Caco-2 (cell line): ENCODE measurements at regions of chr7 and their contacts with region 1.

Region 1: DNA sequence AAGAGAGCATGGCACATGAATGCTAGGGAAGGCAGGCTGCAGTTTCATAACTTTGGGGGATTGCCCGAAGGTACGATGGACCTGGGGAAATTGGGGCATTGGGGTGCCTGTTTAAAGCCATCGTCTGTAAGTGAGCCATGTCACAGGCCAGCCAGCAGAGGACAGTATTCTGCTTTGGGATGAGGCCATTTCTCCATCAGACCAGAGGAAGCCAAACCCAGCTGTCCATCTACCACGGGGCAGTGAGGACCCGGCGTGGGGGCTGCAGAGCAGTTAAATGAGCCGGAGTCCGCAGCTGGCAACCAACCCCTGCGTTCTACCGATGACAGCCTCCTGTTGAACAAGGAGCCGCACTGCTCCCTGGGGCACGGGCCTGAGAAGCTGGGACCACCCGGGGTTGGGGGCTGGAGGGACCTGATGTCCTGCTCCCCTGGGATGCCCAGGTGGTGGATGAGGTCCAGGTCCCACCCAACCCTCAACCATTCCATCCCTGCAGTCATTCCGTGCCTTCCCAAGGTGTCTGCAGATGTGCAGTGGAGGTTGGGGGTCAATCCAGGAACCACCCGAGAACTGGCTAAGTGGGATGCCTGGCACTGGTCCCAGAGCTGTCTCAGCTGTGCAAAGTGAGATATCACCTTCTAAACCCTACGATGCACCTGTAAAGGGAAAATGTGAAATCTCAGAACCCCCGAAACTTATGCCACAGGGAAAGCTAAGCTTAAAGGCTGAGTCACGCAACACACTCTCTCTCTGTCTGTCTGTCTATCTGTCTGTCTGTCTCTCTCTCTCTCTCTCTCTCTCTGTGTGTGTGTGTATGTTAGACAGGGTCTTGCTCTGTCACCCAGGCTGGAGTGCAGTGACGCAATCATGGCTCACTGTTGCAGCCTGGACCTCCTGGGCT is 12.1 kb upstream of the RHBDD2 start:
- DNase-seq: peak; percentile 71 to 76
- H3K4me3 ChIP-seq: no peak overlapping the region
- H3K4me3 Mint-ChIP-seq: no peak overlapping the region
- H3K27ac Mint-ChIP-seq: no peak overlapping the region
- H3K4me1 ChIP-seq: peaks cover 9% of the 10 kb centered on the region
- H3K4me1 Mint-ChIP-seq: peaks cover 11% of the 10 kb centered on the region
- H3K27me3 ChIP-seq: no peaks in the 10 kb centered on the region
- H3K27me3 Mint-ChIP-seq: peaks cover 2% of the 10 kb centered on the region
- CTCF ChIP-seq: peak; percentile 87 to 97

Region 2: DNA sequence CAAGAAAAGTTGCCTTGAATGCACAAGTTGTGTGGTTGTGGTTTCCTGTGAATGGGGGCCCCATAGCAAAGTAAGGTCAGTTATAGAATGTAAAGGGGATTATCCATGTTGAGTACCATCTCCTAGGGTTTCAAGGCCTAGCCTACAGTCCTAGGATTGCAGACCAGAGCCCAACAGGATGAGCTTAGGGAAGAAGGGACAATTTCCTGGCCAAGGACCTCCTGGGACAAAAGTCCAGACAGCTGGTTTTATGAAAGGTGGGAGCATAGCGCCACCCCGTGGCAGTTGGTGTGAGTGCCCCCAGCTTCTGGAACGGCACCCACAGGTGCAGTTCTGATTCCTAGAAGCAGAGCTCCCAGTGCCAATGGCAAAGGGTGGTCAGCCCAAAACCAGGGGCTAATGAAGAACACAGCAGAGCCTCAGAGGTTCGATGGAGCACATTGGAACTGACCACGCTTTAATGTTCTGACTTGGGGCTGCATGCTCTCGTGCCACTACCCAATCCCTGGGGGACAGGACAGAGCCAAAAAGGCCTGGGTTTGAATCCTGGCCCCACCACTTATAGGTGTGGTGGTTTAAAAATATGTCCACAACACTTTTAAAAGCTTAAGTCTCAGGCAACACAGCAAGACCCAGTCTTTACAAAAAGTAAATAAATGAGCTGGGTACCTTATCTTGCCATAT is 153.4 kb after region 1 on chr7:
- CTCF ChIA-PET with region 1: interaction called, 60 read pairs
- POLR2A ChIA-PET with region 1: no interaction called
- intact Hi-C with region 1: loop called (anchors 1 kb)
- DNase-seq: peak; percentile 70 to 80
- H3K4me3 ChIP-seq: no peak overlapping the region
- H3K4me3 Mint-ChIP-seq: no peak overlapping the region
- H3K27ac Mint-ChIP-seq: no peak overlapping the region
- H3K4me1 ChIP-seq: no peaks in the 10 kb centered on the region
- H3K4me1 Mint-ChIP-seq: no peaks in the 10 kb centered on the region
- H3K27me3 ChIP-seq: no peaks in the 10 kb centered on the region
- H3K27me3 Mint-ChIP-seq: no peaks in the 10 kb centered on the region
- CTCF ChIP-seq: peak; percentile 73 to 74